Posterior vena cava (tissue), 2 donors: ENCODE measurements at regions of chrX and their contacts with region 1.

Region 1: DNA sequence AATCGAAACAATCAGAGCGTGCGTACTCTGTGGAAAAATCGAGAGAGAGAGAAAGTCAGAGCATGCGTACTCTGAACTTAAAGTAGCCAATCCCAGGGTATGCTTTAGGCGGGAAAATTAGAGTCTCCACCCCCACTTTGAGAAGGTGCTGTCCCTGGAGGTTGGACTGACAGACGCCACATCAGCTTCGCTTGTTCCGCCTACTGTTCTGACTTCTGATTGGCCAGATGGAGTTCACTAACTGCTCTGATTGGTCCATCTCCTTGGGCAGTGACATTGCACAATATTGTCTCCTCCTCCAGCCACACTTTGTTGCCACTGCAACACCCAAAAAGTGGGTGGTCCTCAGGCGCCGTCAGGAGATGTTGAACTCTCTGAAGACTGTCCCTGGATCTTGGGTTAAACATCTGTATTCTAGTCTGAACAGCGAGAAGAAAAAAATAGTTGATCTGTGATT is at the start of gene SSX5:
- DNase-seq: no peak
- total RNA-seq, gene SSX5: not detected

Region 2: DNA sequence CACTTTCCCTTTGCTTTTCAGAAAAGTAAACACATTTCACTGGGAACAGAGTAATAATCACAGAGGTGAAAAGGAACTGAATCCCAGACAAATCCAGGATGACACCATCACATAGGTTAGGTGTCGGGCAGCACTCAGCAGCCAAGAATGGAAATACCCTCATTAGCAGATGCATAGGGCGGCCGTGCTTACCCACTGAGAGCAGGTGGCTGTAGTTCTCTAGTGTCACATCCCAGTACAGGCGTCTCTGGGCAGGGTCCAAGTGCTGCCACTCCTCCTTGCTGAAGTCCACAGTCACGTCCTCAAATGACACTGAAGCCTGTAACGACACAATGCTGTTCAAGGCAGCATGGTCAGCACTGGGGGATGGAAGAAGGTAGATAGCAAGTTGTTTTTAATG is 740.7 kb before region 1 on chrX:
- intact Hi-C with region 1: loop called in 1 of 2 experiments (anchors 10 kb)
- DNase-seq: no peak